Activated CD4-positive, alpha-beta memory T cell treated with anti-CD3 and anti-CD28 coated beads for 36 hours (primary cell): ENCODE measurements at regions of chr22 and their contacts with region 1.

Region 1: DNA sequence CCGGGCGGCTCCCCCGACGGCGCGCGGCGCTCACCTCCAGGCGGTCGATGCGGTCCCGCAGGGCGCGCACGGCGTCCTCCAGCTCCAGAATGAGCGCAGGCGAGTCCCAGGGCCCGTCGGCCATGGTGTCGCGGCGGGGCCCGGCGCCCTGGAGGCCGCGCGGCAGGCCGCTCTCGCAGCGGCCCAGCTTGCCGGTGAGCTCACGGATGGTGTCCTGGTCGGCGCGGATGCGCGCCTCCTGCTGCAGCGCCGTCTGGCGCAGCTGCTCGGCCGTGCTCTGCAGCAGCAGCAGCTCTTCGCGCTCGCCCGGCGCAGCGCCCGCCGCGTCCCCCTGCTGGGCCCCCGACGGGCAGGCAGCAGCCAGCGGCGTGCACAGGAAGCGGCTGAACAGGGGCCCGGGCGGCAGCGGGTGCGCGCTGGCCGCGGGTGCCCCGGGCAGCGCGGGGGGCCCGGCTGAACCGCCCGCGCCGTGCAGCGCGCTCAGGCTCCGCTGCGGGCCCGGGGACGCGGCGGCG is 570 bp downstream of the NPTXR start:
- DNase-seq: peak; percentile 72
- H3K4me3 Mint-ChIP-seq: peak overlapping the region; percentile 37
- H3K27ac Mint-ChIP-seq: no peak overlapping the region
- H3K4me1 Mint-ChIP-seq: peaks cover 11% of the 10 kb centered on the region
- H3K27me3 Mint-ChIP-seq: peaks cover 15% of the 10 kb centered on the region

Region 2: GRCh38 chr22:38638734-38639133 is 204.5 kb before region 1 on chr22:
- CTCF ChIA-PET with region 1: no interaction called
- POLR2A ChIA-PET with region 1: no interaction called
- intact Hi-C with region 1: no loop called
- DNase-seq: no peak
- H3K4me3 Mint-ChIP-seq: no peak overlapping the region
- H3K27ac Mint-ChIP-seq: no peak overlapping the region
- H3K4me1 Mint-ChIP-seq: no peaks in the 10 kb centered on the region
- H3K27me3 Mint-ChIP-seq: peaks cover 13% of the 10 kb centered on the region

Region 3: GRCh38 chr22:38718414-38718813 is 124.8 kb before region 1 on chr22:
- CTCF ChIA-PET with region 1: no interaction called
- POLR2A ChIA-PET with region 1: no interaction called
- intact Hi-C with region 1: no loop called
- DNase-seq: no peak
- H3K4me3 Mint-ChIP-seq: no peak overlapping the region
- H3K27ac Mint-ChIP-seq: peak overlapping the region; percentile 9
- H3K4me1 Mint-ChIP-seq: peaks cover 15% of the 10 kb centered on the region
- H3K27me3 Mint-ChIP-seq: no peaks in the 10 kb centered on the region

Region 4: DNA sequence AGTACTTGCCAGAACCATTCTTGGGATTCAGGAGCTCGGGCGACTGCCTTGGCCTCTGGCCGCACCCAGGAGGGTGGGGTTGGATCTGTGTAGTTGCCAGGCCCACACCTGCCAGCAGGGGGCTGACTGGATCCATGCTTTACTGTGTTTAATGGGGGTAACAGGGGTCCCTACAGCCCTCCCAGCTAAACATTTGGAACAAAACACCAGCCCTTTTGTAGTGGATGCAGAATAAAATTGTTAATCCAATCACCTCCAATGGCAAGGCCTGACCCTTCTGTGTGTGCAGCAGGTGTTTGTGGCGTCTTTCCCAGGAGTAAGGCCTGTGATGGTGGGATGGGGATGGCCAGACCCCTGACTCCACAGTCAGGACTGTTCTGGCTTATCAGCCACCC is 109.9 kb before region 1 on chr22:
- CTCF ChIA-PET with region 1: interaction called, 10 read pairs
- POLR2A ChIA-PET with region 1: no interaction called
- intact Hi-C with region 1: no loop called
- DNase-seq: peak; percentile 63
- H3K4me3 Mint-ChIP-seq: peak overlapping the region; percentile 29
- H3K27ac Mint-ChIP-seq: peak overlapping the region; percentile 46
- H3K4me1 Mint-ChIP-seq: peaks cover 39% of the 10 kb centered on the region
- H3K27me3 Mint-ChIP-seq: no peaks in the 10 kb centered on the region

Region 5: DNA sequence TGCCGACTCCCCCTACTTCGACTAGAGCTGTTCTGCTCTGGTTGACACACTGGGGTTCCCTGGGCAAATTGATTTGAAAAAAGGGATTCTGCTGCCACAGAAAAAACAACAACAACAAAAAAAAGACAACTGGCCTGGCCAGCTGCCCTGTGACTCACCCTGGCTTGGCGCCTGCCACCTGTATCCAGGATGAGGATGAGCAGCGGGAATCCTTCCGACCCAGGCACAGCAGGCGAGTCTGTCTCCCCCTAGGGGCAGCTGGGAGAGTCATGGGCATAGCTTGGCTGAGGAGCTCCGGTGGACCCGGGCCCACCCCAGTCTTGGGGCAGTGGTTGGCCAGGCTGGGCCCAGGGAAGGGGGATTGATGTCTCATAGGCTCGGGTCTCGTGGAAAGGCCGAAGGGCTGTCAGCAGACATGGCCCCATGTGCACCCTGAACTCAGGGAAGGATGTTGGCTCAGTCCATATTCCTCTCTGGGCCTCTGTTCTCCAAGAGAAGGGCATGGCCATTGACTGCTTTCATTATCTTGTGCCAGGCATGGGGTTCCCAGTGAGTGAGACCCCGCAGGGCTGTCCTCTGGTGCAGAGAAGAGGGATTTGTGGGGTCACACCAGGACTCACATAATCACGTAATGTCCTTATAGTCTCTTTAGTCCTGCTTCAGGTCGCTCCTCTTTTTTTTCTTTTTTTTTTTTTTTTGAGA is 77.0 kb before region 1 on chr22:
- CTCF ChIA-PET with region 1: interaction called, 37 read pairs
- POLR2A ChIA-PET with region 1: no interaction called
- intact Hi-C with region 1: no loop called
- DNase-seq: peak; percentile 55
- H3K4me3 Mint-ChIP-seq: no peak overlapping the region
- H3K27ac Mint-ChIP-seq: no peak overlapping the region
- H3K4me1 Mint-ChIP-seq: no peaks in the 10 kb centered on the region
- H3K27me3 Mint-ChIP-seq: no peaks in the 10 kb centered on the region